K562 (cell line): ENCODE measurements at regions of chr11 and their contacts with region 1.

Region 1: GRCh38 chr11:88421530-88421929 is 84.0 kb upstream of the CTSC start:
- DNase-seq: peak; percentile 19 to 86 (median 40)
- ATAC-seq: peak; percentile 74
- H3K4me3 ChIP-seq: no peak overlapping the region
- H3K27ac ChIP-seq: peak overlapping the region; percentile 73
- H3K4me1 ChIP-seq: peaks cover 0 to 38% of the 10 kb centered on the region in 2 experiments; a peak in 4 of 5 replicates
- H3K27me3 ChIP-seq: no peaks in the 10 kb centered on the region
- CTCF ChIP-seq: no peak
- EP300 ChIP-seq: peak; percentile 73; the same call in 1 of the 2 replicates
- POLR2A ChIP-seq: no peak
- RAD21 ChIP-seq: peak in 1 of 2 experiments; percentile 15; a peak in 1 of 4 replicates

Region 2: GRCh38 chr11:88357323-88358039 is 64.0 kb before region 1 on chr11:
- CTCF ChIA-PET with region 1: no interaction called
- POLR2A ChIA-PET with region 1: no interaction called
- in situ Hi-C with region 1: no loop called
- intact Hi-C with region 1: loop called (anchors 5 kb)
- DNase-seq: peak; percentile 29 to 60 (median 47)
- ATAC-seq: peak; percentile 85
- H3K4me3 ChIP-seq: no peak overlapping the region
- H3K27ac ChIP-seq: peak overlapping the region; percentile 83
- H3K4me1 ChIP-seq: peaks cover 0 to 16% of the 10 kb centered on the region in 2 experiments; a peak in 3 of 5 replicates
- H3K27me3 ChIP-seq: no peaks in the 10 kb centered on the region
- CTCF ChIP-seq: no peak
- EP300 ChIP-seq: no peak
- POLR2A ChIP-seq: no peak
- RAD21 ChIP-seq: no peak